G401 (cell line): ENCODE measurements at regions of chr20 and their contacts with region 1.

Region 1: DNA sequence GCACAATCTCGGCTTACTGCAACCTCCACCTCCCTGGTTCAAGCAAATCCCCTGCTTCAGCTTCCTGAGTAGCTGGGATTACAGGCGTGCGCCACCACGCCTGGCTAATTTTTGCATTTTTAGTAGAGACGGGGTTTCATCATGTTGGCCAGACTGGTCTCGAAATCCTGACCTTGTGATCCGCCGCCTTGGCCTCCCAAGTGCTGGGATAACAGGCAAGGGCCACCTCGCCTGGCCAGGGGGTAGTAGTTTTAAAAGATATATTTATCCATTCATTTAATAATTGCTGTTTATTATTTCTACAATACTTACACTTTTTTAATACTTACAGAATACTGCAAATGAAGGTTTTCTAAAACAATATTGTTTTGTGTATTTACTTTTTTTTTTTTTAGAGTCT is 15.5 kb upstream of the DDX27 start:
- DNase-seq: no peak

Region 2: GRCh38 chr20:49151436-49151835 is 52.3 kb before region 1 on chr20:
- in situ Hi-C with region 1: loop called (anchors 5 kb)
- DNase-seq: no peak

Region 3: GRCh38 chr20:49245921-49246740 is 42.4 kb after region 1 on chr20:
- in situ Hi-C with region 1: loop called (anchors 5 kb)
- DNase-seq: peak; percentile 45